ENCODE measurements at regions of chr7 and their contacts with region 1.

Region 1: DNA sequence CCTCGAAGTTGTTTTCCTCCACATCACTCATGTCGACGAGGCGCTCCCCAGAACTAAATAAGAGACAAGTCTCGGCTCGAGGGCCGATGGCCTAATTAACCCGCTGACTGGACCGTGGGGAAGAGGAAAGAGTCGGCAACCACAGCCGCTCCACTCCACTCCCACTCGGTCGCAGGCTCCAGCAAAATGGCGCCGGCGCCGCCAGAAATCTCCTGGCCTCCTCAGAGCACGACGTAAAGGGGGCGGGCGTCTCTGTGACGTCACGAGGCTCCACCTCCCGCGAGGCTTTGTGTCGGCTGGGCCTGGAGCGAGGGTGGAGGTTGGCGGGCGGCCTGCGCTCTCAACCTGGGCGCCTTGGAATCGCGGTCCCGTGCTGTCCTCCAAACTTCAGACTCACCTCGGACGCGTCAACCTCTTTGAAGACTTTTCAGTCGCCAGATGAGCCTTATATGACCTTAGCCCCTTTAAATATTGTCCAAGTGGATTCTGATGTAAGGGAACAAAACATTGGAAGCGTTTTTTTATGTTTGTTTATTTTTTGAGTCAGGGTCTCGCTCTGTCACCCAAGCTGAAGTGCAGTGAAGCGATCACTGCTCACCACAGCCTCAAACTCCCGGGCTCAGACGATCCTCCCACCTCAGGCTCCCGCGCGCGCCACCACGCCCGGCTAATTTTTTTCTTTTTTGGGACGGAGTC is at the start of gene TRA2A:
- DNase-seq: peak; percentile 99
- ATAC-seq: peak; percentile 89
- H3K4me3 Mint-ChIP-seq: peak within 1 kb of the TSS; percentile 93
- H3K27ac Mint-ChIP-seq: peak within 1 kb of the TSS; percentile 100
- H3K4me1 Mint-ChIP-seq: peaks cover 39% of the 10 kb centered on the region
- H3K27me3 Mint-ChIP-seq: no peaks in the 10 kb centered on the region
- CTCF ChIP-seq: no peak
- total RNA-seq, gene TRA2A: 86.3 to 86.5 TPM

Region 2: GRCh38 chr7:23298885-23299769 is 232.8 kb before region 1 on chr7 and contains the start of gene MALSU1:
- CTCF ChIA-PET with region 1: interaction called, 3 read pairs
- POLR2A ChIA-PET with region 1: interaction called, 12 read pairs
- intact Hi-C with region 1: no loop called
- DNase-seq: peak; percentile 100
- ATAC-seq: peak; percentile 100
- H3K4me3 Mint-ChIP-seq: peak within 1 kb of the TSS; percentile 97
- H3K27ac Mint-ChIP-seq: peak within 1 kb of the TSS; percentile 86
- H3K4me1 Mint-ChIP-seq: peaks cover 34% of the 10 kb centered on the region
- H3K27me3 Mint-ChIP-seq: no peaks in the 10 kb centered on the region
- CTCF ChIP-seq: no peak
- total RNA-seq, gene MALSU1: 99.1 to 101 TPM

Region 3: DNA sequence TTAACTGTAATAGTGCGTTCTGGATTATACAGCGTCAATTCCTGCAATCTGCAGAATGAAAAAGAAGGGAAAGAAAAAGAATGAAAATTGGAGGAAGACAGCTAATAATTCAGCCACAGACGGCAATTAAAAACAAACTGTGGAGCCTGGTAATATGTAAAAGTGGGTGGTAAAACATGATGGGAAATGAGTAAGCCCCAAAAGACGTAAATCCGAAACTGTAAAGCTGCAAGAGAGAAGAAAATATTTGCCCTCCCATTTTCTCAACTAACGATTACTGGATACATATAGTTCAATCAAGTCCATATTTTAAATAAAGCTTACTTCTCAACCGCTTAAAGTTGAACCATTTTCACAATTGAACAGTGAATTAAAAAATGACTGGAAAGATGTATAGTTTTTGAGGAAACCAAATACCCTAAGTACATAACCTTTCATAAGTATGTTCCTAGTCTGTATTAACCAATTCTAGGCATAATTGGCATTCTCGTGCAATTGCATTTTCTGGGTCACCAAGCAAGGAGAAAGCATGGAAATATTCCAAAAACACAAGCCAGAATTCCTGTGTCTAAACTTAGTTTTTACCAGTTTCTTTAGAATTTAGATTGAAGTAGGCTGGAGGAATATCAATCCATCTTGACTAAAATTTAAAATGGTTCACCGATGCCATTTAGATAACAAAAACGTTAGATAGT is 188.0 kb before region 1 on chr7:
- CTCF ChIA-PET with region 1: no interaction called
- POLR2A ChIA-PET with region 1: no interaction called
- intact Hi-C with region 1: no loop called
- DNase-seq: no peak
- ATAC-seq: no peak
- H3K4me3 Mint-ChIP-seq: no peak overlapping the region
- H3K27ac Mint-ChIP-seq: no peak overlapping the region
- H3K4me1 Mint-ChIP-seq: peaks cover 32% of the 10 kb centered on the region
- H3K27me3 Mint-ChIP-seq: no peaks in the 10 kb centered on the region
- CTCF ChIP-seq: no peak

Region 4: DNA sequence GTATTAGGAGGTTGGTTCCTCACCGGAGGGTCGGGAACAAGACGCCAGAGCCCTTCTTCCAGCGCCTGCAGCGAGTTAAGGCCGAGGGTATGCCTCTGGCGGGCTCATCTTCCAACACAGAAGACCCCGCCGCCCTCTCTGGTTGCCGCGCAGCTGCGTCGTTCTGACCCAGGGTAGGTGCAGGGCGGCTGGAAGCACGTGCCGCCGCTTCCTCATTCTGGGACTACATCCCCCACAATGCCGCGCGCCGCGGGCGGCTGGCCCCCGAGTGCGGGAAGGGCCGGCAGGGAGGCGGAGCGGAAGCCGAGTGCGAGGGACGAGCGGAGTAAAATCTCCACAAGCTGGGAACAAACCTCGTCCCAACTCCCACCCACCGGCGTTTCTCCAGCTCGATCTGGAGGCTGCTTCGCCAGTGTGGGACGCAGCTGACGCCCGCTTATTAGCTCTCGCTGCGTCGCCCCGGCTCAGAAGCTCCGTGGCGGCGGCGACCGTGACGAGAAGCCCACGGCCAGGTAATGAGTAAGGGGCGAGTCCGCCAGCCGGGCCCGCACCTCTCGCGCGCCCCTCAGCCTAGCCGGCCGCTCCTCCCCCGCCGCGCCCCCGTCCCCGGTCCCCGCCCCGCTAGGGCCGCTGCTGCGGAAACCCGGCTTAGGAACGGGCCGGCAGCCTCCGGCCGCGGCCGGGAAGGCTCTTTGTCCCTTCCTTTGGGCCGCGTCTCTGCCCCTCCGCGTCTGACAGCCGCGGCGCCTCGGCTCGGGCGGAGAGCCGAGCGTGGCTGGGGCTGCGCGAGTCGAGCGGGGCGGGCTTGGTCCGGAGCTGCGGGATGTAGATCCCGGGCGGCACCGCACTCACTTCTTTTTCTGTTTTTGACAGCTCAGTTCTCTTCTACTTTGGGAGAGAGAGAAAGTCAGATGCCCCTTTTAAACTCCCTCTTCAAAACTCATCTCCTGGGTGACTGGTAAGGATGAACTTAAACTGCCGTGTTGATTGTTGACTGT is 65.5 kb after region 1 on chr7 and contains the start of gene CCDC126:
- CTCF ChIA-PET with region 1: no interaction called
- POLR2A ChIA-PET with region 1: interaction called, 3 read pairs
- intact Hi-C with region 1: loop called (anchors 5 kb)
- DNase-seq: peak; percentile 87
- ATAC-seq: peak; percentile 78
- H3K4me3 Mint-ChIP-seq: peak within 1 kb of the TSS; percentile 83
- H3K27ac Mint-ChIP-seq: peak within 1 kb of the TSS; percentile 61
- H3K4me1 Mint-ChIP-seq: peaks cover 64% of the 10 kb centered on the region
- H3K27me3 Mint-ChIP-seq: peaks cover 2% of the 10 kb centered on the region
- CTCF ChIP-seq: no peak
- total RNA-seq, gene CCDC126: 5.5 to 6.5 TPM